Activated CD8-positive, alpha-beta T cell treated with anti-CD3 and anti-CD28 coated beads for 36 hours (primary cell): ENCODE measurements at regions of chr3 and their contacts with region 1.

Region 1: DNA sequence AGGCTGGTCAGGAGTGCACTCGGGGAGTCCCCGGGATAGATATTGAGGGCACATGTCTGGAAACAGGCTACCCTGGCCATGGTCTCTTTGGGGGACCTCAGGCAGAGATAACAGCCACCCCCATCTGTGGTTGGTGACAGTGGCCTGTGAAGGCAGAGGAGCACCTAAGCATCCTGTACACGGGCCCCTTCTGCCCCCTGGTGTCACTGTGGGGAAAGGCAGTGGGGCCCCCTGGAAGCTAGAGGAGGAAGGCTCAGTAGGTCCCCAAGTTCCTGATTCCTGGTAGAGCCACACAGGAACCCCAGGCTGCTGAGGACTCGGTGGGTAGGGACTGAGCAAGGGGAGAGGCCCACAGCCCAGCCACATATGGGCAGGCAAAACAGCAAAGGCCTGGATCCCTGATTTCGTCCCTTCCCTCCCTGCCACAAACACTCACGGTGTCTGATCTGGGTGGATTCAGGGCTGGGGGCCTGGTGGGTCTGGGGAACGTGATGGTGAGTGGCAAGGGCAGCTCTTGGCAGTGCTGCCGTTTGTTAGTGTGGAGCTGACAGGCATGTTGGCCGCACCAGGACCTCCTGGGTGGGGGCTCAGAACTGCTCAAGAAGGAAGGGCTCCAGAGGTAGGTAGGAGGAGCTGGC is 14.1 kb upstream of the CXCR6 start:
- DNase-seq: peak; percentile 75
- ATAC-seq: peak; percentile 98
- H3K4me3 Mint-ChIP-seq: no peak overlapping the region
- H3K27ac Mint-ChIP-seq: no peak overlapping the region
- H3K4me1 Mint-ChIP-seq: no peaks in the 10 kb centered on the region
- H3K27me3 Mint-ChIP-seq: no peaks in the 10 kb centered on the region
- CTCF ChIP-seq: peak; percentile 88

Region 2: GRCh38 chr3:45507820-45508317 is 421.3 kb before region 1 on chr3:
- CTCF ChIA-PET with region 1: interaction called, 3 read pairs
- POLR2A ChIA-PET with region 1: no interaction called
- intact Hi-C with region 1: loop called (anchors 5 kb)
- DNase-seq: peak; percentile 9
- ATAC-seq: no peak
- H3K4me3 Mint-ChIP-seq: no peak overlapping the region
- H3K27ac Mint-ChIP-seq: no peak overlapping the region
- H3K4me1 Mint-ChIP-seq: peaks cover 12% of the 10 kb centered on the region
- H3K27me3 Mint-ChIP-seq: no peaks in the 10 kb centered on the region
- CTCF ChIP-seq: no peak

Region 3: DNA sequence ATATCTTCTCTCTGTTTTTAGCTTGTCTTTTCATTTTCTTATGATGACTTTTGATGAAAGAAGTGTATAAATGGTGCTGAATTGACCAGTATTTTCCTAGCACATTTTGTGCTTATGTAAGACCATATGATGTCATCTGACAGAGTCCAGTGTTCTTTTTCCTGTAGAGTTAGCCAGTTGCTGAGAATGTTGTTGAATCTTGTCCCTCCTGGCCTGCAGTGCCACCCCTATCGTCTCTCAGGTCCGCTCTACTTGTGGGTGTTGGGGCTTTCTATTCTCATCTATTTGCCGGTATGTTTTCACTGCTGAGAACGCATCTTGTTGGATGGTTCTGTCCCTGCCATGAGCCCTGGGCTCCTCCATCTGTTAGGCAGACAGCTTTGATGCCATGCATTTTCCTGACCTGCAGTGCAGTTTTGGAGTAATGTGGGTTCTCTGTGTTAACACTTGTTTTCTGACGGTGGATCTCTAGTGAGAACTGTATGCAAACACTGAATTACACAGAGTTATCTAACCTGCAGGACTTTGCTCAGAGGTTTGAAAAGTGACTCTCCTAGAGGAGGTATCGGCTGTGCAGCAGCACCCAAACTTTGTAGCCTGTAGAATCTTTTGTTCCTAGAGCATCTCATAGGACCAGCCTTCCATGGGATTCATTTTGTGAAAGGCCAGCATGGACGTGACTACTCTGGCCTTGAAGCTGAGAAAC is 177.5 kb before region 1 on chr3:
- CTCF ChIA-PET with region 1: interaction called, 10 read pairs
- POLR2A ChIA-PET with region 1: no interaction called
- intact Hi-C with region 1: no loop called
- DNase-seq: no peak
- ATAC-seq: no peak
- H3K4me3 Mint-ChIP-seq: no peak overlapping the region
- H3K27ac Mint-ChIP-seq: no peak overlapping the region
- H3K4me1 Mint-ChIP-seq: no peaks in the 10 kb centered on the region
- H3K27me3 Mint-ChIP-seq: no peaks in the 10 kb centered on the region
- CTCF ChIP-seq: no peak

Region 4: DNA sequence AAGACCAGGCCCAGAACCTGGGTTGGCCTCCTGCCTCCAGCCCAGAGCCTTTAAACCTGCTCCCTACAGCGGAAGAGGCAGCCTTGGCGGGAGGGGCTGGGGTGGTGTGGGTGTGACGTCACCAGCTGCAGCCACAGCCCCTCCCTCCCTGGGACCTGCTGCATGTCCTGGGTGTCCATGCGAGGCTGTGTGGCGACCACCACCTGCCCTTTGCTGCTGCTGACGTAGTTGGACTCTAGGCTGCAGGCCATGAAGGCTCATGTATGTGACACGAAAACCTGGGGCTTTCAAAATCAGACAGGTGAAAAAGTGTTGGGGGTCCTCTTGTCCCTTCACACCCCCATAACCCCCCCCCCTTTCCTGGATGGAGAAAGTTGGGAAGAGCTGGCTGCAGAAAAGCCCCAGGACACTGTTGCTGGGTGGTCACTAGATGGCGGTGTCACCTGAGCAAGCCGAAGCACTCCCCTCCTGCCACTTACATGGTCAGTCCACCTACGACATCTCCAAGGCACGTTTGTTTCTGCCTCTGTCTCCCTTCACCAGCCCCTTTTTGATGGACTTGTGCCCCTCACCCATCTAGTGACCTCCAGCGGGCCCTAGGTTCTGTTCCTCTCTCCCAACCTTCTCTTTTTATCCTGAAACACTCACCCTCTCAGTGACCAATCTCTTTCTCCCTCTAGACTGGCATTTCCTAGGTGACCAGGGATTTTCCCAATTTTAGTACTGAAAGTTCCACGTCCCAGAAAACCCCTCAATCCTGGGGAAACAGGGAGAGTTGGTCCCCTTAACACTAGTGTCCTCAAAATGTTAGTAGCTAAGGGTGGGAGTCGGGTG is 168.1 kb before region 1 on chr3:
- CTCF ChIA-PET with region 1: interaction called, 54 read pairs
- POLR2A ChIA-PET with region 1: interaction called, 3 read pairs
- intact Hi-C with region 1: loop called (anchors 2 kb)
- DNase-seq: peak; percentile 60
- ATAC-seq: peak; percentile 77
- H3K4me3 Mint-ChIP-seq: no peak overlapping the region
- H3K27ac Mint-ChIP-seq: no peak overlapping the region
- H3K4me1 Mint-ChIP-seq: peaks cover 2% of the 10 kb centered on the region
- H3K27me3 Mint-ChIP-seq: peaks cover 3% of the 10 kb centered on the region
- CTCF ChIP-seq: peak; percentile 77

Region 5: GRCh38 chr3:45881078-45882022 is 47.8 kb before region 1 on chr3:
- CTCF ChIA-PET with region 1: interaction called, 15 read pairs
- POLR2A ChIA-PET with region 1: no interaction called
- intact Hi-C with region 1: no loop called
- DNase-seq: peak; percentile 74
- ATAC-seq: peak; percentile 97
- H3K4me3 Mint-ChIP-seq: no peak overlapping the region
- H3K27ac Mint-ChIP-seq: peak overlapping the region; percentile 2
- H3K4me1 Mint-ChIP-seq: peaks cover 22% of the 10 kb centered on the region
- H3K27me3 Mint-ChIP-seq: peaks cover 38% of the 10 kb centered on the region
- CTCF ChIP-seq: no peak

Region 6: DNA sequence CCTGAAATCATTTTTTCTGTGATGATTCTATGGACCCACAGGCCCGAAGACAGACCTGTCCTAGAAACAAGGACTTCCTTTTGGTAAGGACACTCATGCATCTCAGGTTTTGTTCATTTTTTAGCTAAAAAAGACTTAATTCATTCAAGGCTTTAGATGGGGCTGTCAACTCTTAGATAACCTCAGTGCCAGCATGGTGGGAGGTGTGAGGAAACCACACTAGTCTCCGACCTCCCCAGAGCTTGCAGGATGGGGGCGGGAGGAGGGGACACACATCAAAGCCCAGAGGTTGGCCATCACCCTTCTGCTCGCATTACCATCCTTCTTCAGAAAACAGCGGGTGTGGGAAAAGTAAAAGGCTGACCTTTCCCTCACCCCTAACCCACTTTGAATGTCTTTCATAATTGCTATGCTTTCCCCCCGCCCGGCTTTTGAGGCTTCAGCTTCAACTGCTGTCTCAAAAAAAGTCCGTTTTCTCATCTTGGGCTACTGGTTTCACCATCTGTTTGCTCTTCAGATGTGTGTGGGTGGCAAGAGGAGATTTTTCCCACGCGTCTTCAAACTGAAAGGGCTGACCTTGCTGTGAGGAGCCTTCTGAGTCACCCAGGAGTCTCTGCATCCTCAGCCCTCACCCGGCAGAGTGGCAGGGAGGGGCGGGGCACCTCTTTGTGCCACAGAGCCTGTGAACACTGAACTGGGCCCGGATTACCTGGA is 13.5 kb before region 1 on chr3:
- CTCF ChIA-PET with region 1: interaction called, 4 read pairs
- POLR2A ChIA-PET with region 1: interaction called, 10 read pairs
- intact Hi-C with region 1: no loop called
- DNase-seq: peak; percentile 91
- ATAC-seq: peak; percentile 93
- H3K4me3 Mint-ChIP-seq: peak overlapping the region; percentile 51
- H3K27ac Mint-ChIP-seq: peak overlapping the region; percentile 50
- H3K4me1 Mint-ChIP-seq: peaks cover 37% of the 10 kb centered on the region
- H3K27me3 Mint-ChIP-seq: peaks cover 11% of the 10 kb centered on the region
- CTCF ChIP-seq: no peak

Region 7: DNA sequence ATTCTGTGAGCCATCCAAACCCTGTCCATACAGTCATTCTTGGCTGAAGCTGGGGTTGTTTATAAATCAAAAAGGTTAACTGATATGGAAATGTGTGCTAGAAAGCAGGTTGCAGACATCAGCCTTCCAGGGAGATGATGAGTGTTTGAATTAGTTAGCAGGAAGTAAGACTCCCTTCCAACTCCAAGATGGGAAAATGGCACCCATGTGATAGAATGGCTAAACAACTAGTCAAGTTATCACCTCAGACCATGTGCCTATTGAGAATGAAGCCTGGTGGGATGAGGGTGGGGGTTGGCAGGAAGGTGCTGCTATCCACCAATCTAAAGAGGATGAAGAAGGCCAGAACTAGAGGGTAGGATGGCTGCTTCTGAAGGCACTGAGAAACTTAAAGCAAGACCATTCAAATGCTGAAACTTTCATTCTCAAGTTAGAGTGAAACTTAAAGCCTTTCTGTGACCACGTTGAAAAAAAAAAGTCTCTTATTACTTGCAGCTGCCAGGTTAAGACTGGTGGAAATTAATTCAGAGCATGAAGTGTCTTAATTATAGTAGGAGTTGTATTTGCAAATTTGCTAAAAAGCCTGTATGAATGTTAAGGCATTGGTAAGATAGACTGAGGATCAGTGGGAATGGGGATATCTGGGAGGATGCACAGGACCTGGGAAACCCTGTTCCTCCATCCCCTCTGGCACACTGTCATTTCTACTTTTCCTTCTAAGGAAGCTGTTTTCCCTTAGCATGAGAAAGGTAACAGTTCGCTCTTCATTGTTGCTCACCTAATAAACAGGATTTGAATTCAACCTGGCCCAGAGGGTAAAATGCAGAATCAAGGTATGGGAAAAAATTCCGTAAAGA is 349.9 kb after region 1 on chr3:
- CTCF ChIA-PET with region 1: no interaction called
- POLR2A ChIA-PET with region 1: no interaction called
- intact Hi-C with region 1: no loop called
- DNase-seq: no peak
- ATAC-seq: peak; percentile 14
- H3K4me3 Mint-ChIP-seq: no peak overlapping the region
- H3K27ac Mint-ChIP-seq: peak overlapping the region; percentile 77
- H3K4me1 Mint-ChIP-seq: peaks cover 65% of the 10 kb centered on the region
- H3K27me3 Mint-ChIP-seq: peaks cover 5% of the 10 kb centered on the region
- CTCF ChIP-seq: no peak